ENCODE measurements at regions of chr2 and their contacts with region 1.

Region 1: DNA sequence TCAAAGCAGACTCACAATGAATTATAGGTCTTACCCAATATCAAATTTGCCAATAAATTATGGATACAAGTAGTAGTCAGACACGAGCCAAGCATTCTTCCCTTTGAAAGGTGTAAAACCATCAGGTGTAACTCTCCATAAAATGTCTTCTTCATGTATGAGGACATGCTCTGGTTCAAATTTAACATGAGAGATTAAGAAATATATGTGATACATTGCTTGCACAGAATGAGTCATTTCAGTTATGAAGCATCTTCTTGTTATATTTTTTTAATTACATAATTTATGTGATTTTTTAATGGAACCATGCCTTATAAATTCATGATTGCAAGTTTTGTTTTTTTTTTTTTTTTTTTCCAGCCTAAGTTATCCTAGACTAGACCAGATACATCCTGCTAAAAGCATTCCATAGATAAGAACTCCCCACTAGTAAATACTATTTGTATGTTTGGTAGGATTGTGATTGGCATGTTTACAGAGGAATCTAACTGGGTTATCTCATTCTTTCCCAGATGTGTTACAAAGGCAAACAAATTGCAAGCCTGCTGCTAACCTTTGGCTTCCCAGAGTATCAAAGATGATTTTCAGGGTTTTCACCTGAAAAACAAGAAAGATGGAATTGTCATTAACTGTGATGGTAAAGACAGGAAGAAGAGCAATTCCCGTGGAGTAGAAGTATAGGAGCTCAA is 621.9 kb downstream of the XIRP2 start:
- DNase-seq: no peak
- H3K4me3 ChIP-seq: no peak overlapping the region
- H3K27ac ChIP-seq: peak overlapping the region in 1 of 4 donors; percentile 7
- H3K4me1 ChIP-seq: peaks cover 0 to 10% (median 9%) of the 10 kb centered on the region in 4 donors
- H3K27me3 ChIP-seq: no peaks in the 10 kb centered on the region
- CTCF ChIP-seq: no peak
- EP300 ChIP-seq: no peak
- POLR2A ChIP-seq: no peak

Region 2: GRCh38 chr2:167292430-167293171 is 217.6 kb before region 1 on chr2:
- intact Hi-C with region 1: loop called (anchors 10 kb)
- DNase-seq: peak; percentile 93
- H3K4me3 ChIP-seq: peak within 1 kb of the TSS; percentile 72 to 93 (median 88)
- H3K27ac ChIP-seq: peak within 1 kb of the TSS; percentile 83 to 94 (median 90)
- H3K4me1 ChIP-seq: peaks cover 0 to 21% (median 6%) of the 10 kb centered on the region in 4 donors
- H3K27me3 ChIP-seq: peaks cover 0 to 3% (median 0%) of the 10 kb centered on the region in 3 donors
- CTCF ChIP-seq: peak in 3 of 4 experiments; percentile 24 to 34 (median 34)
- EP300 ChIP-seq: no peak
- POLR2A ChIP-seq: peak; percentile 18 to 20